ENCODE measurements at regions of chr7 and their contacts with region 1.

Region 1: GRCh38 chr7:54015251-54015650 is 526.9 kb upstream of the VSTM2A start:
- DNase-seq: no peak
- H3K4me3 ChIP-seq: no peak overlapping the region
- H3K27ac ChIP-seq: no peak overlapping the region
- H3K4me1 ChIP-seq: no peaks in the 10 kb centered on the region
- H3K27me3 ChIP-seq: no peaks in the 10 kb centered on the region
- CTCF ChIP-seq: no peak
- EP300 ChIP-seq: no peak
- POLR2A ChIP-seq: no peak

Region 2: DNA sequence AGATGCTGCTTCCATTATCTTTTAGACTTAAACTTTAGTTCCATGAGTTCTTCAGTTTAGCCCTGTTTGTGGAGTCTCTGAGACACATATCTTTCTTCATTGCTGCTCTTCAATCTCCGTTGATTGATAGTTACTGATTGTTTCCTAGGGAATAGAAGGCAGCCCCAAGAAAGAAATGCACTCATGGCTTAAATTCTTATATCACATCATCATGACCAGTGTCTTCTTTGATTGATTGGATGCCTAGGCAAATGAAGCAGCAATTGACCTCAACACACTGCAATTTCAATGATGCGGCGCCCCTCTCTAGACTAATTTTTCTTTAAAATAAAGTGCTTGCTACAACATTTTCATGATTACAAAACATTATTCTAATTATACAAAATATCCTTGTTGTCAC is 49.5 kb before region 1 on chr7:
- in situ Hi-C with region 1: loop called in 1 of 4 experiments (anchors 10 kb)
- intact Hi-C with region 1: no loop called
- DNase-seq: no peak
- H3K4me3 ChIP-seq: no peak overlapping the region
- H3K27ac ChIP-seq: no peak overlapping the region
- H3K4me1 ChIP-seq: no peaks in the 10 kb centered on the region
- H3K27me3 ChIP-seq: no peaks in the 10 kb centered on the region
- CTCF ChIP-seq: no peak
- EP300 ChIP-seq: no peak
- POLR2A ChIP-seq: no peak